HCT116 (cell line): ENCODE measurements at regions of chr3 and their contacts with region 1.

Region 1: DNA sequence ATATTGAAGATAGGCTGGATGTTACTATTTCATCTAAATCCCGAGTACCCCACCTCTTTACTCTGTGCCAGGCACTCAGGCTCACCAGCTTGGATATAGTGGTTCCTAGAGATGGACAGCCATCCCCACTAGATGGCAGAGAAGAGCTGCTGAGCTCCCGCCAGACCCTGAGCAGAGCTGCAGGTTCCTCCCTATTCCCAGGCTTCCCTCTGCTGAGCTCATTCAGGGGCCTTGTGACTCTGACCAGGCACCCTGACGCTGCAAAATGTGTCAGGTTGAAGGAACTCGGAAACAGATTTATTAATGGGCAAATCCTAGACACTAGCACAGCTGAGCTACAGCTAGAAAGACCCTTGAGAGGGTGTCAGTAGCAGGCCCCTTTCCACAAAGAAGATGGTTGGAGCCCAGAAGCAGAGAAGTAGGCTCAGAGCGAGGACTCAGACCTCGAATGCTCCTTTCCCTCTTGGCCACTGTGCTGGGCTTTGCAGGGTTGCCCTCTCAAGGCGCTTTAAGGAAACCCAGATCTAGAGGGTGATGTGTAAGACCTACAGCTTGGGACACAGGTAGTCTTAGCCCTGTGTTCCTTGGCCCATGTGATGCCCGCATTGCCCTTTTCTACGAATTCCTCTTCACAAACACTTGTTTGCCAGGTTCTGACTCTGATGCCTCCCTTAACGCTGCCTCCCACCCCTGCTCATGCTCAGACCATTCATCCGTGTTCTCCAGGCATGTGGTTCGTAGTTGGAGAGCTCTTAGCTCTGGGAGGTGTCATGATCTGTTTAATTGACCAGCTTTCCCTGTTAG is 38.0 kb upstream of the RHO start:
- DNase-seq: peak; percentile 49
- ATAC-seq: peak; percentile 92
- H3K4me3 ChIP-seq: no peak overlapping the region
- H3K27ac ChIP-seq: no peak overlapping the region
- H3K4me1 ChIP-seq: peaks cover 5 to 21% of the 10 kb centered on the region in 2 experiments
- H3K27me3 ChIP-seq: no peaks in the 10 kb centered on the region
- CTCF ChIP-seq: peak; percentile 84 to 87 (median 86)
- POLR2A ChIP-seq: no peak
- RAD21 ChIP-seq: peak; percentile 95

Region 2: GRCh38 chr3:129606636-129607390 is 116.4 kb after region 1 on chr3 and contains the start of gene PLXND1:
- CTCF ChIA-PET with region 1: interaction called, 3 read pairs
- POLR2A ChIA-PET with region 1: no interaction called
- RAD21 ChIA-PET with region 1: no interaction called
- intact Hi-C with region 1: loop called (anchors 5 kb)
- DNase-seq: no peak
- ATAC-seq: peak; percentile 71
- H3K4me3 ChIP-seq: peak within 1 kb of the TSS; percentile 50 to 70
- H3K27ac ChIP-seq: peak within 1 kb of the TSS; percentile 72
- H3K4me1 ChIP-seq: peaks cover 15 to 53% of the 10 kb centered on the region in 2 experiments
- H3K27me3 ChIP-seq: no peaks in the 10 kb centered on the region
- CTCF ChIP-seq: no peak
- POLR2A ChIP-seq: peak; percentile 44
- RAD21 ChIP-seq: no peak
- total RNA-seq, gene PLXND1: 47.3 TPM

Region 3: DNA sequence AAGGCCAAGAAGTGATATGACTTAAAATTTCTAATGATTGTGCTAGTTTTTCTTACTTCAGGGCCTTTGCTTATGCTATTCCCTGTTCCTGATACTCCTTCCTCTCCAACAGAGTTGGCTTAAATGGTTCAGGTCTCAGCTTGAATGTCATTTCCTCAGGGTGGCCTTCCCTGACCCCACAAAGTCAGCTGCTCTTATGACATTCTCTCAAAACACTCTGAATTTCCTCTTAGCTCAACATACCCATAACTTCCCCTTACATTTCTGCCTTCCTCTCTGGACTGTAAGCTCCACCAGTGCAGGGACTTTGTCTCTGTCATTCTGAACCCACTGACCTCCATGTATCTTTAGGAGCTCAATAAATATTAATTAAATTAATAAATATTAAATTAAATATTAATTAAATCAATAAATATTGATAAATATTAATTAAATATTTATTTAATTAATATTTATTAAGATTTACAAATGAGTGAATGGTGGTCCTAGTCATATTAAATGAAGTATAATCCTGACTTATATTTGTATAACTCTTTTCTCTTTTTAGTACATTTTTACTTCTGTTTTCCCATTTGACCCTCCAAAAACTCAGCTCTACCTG is 420.9 kb after region 1 on chr3:
- CTCF ChIA-PET with region 1: no interaction called
- POLR2A ChIA-PET with region 1: no interaction called
- RAD21 ChIA-PET with region 1: no interaction called
- intact Hi-C with region 1: no loop called
- DNase-seq: no peak
- ATAC-seq: no peak
- H3K4me3 ChIP-seq: no peak overlapping the region
- H3K27ac ChIP-seq: no peak overlapping the region
- H3K4me1 ChIP-seq: no peaks in the 10 kb centered on the region
- H3K27me3 ChIP-seq: no peaks in the 10 kb centered on the region
- CTCF ChIP-seq: no peak
- POLR2A ChIP-seq: no peak
- RAD21 ChIP-seq: no peak

Region 4: DNA sequence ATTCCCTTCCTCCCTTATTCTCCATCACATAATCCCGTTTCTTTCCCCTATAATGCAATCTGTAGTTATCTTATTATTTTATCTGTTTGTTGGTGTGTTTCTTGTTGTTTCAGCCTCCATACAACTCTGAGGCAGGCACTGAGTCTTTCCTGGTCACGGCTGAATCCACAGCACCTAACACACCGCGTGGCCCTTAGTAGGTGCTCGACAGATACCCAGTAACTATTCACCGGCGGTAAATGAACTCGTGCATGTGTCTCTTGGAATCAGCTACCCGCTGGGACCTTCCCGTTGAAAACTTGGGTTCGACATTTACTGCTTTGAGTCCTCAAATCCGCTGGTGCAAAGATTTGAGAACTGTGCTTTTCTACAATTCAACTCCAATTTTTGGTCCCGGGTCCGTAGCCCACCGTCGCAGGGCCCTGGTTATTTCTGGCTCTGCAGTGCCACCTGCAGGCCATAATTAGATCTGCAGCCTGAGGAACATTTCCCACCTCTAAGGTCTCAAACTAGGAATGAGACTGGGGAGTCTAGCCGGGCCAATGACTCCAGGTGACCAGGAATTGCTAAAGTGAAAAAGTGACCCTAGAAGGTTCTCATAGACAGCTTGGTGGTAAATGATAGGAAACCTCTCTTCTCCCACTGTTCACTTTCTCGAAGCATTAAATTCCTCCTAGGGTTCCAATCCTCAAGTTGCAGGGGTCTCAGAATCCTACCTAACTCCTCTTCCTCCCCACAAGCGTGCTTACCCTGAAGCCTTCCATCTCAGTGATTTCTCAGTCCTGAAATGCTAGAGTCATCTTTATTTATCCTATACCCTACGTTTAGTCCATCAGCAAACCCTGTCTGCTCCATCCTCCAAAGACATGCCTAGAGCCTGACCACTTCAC is 444.0 kb after region 1 on chr3:
- CTCF ChIA-PET with region 1: interaction called, 10 read pairs
- POLR2A ChIA-PET with region 1: no interaction called
- RAD21 ChIA-PET with region 1: no interaction called
- intact Hi-C with region 1: loop called (anchors 1 kb)
- DNase-seq: peak; percentile 12
- ATAC-seq: peak; percentile 82
- H3K4me3 ChIP-seq: no peak overlapping the region
- H3K27ac ChIP-seq: no peak overlapping the region
- H3K4me1 ChIP-seq: peaks cover 0 to 3% of the 10 kb centered on the region in 2 experiments; a peak in 1 of 4 replicates
- H3K27me3 ChIP-seq: no peaks in the 10 kb centered on the region
- CTCF ChIP-seq: peak; percentile 81 to 98 (median 91)
- POLR2A ChIP-seq: no peak
- RAD21 ChIP-seq: peak; percentile 96

Region 5: DNA sequence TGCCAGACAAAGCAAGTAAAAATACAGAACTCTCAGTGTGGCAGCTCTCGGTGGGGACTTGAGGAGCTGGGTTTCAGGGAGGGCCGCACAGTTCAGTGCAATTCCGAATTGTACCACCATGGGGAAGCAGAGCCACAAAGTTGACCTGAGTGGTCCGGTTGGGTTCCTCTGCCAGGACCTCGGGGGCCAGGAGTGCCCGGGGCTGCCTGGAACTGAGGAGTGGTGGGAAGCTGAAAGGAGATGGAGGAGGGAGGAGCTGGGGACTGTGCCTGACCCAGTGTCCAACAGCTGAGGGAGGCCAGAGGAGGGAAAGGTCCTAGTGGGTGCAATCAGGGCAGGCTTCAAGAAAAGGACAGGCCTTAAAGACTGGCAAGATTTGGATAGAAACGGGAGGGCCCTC is 451.9 kb after region 1 on chr3:
- CTCF ChIA-PET with region 1: interaction called, 12 read pairs
- POLR2A ChIA-PET with region 1: no interaction called
- RAD21 ChIA-PET with region 1: no interaction called
- intact Hi-C with region 1: no loop called
- DNase-seq: peak; percentile 65
- ATAC-seq: peak; percentile 97
- H3K4me3 ChIP-seq: no peak overlapping the region
- H3K27ac ChIP-seq: no peak overlapping the region
- H3K4me1 ChIP-seq: peaks cover 0 to 3% of the 10 kb centered on the region in 2 experiments; a peak in 1 of 4 replicates
- H3K27me3 ChIP-seq: no peaks in the 10 kb centered on the region
- CTCF ChIP-seq: peak; percentile 76 to 98 (median 87)
- POLR2A ChIP-seq: no peak
- RAD21 ChIP-seq: peak; percentile 99